Common myeloid progenitor, CD34-positive (primary cell): ENCODE measurements at regions of chr12 and their contacts with region 1.

Region 1: GRCh38 chr12:66409195-66409871 is 107.0 kb downstream of the HELB start:
- DNase-seq: peak; percentile 54 to 79 (median 77)
- H3K4me3 ChIP-seq: no peak overlapping the region
- H3K27ac ChIP-seq: no peak overlapping the region
- H3K4me1 ChIP-seq: peaks cover 0 to 8% (median 4%) of the 10 kb centered on the region in 4 experiments
- H3K27me3 ChIP-seq: no peaks in the 10 kb centered on the region

Region 2: DNA sequence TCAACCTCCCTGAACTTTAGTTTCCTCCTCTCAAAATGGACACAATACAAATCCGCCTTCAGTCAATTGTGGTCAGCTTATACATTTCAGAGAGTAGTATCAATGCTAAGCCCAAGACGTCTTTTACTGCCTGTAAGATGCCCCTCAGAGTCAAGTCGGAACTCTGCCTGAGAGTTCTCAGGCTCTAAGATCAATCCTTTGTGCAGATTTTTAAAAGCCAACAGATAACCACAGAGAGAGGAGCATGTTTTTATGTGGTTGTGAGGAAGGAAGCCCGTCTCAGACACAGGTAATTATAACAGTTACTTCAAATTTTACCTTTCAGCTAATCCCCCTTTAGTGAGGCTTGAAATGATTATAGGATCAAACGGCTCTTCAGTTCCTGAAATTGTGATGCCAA is 15.4 kb before region 1 on chr12:
- CTCF ChIA-PET with region 1: interaction called, 10 read pairs
- POLR2A ChIA-PET with region 1: no interaction called
- DNase-seq: no peak
- H3K4me3 ChIP-seq: no peak overlapping the region
- H3K27ac ChIP-seq: no peak overlapping the region
- H3K4me1 ChIP-seq: no peaks in the 10 kb centered on the region
- H3K27me3 ChIP-seq: no peaks in the 10 kb centered on the region